Tibial artery (tissue), 4 donors: ENCODE measurements at regions of chr11 and their contacts with region 1.

Region 1: GRCh38 chr11:130894322-130895025 is 21.8 kb downstream of the SNX19 start:
- DNase-seq: peak; percentile 74 to 86
- H3K4me3 ChIP-seq: no peak overlapping the region
- H3K27ac ChIP-seq: peak overlapping the region; percentile 82 to 86
- H3K4me1 ChIP-seq: peaks cover 3 to 80% (median 48%) of the 10 kb centered on the region in 4 donors
- H3K27me3 ChIP-seq: no peaks in the 10 kb centered on the region
- CTCF ChIP-seq: peak; percentile 90 to 94

Region 2: GRCh38 chr11:130434521-130435223 is 459.8 kb before region 1 on chr11:
- intact Hi-C with region 1: loop called (anchors 10 kb)
- DNase-seq: peak; percentile 70 to 86
- H3K4me3 ChIP-seq: peak overlapping the region; percentile 53 to 59
- H3K27ac ChIP-seq: peak overlapping the region; percentile 74 to 80
- H3K4me1 ChIP-seq: peaks cover 0 to 21% (median 7%) of the 10 kb centered on the region in 4 donors
- H3K27me3 ChIP-seq: no peaks in the 10 kb centered on the region
- CTCF ChIP-seq: peak; percentile 68 to 89